ENCODE measurements at regions of chr6 and their contacts with region 1.

Region 1: DNA sequence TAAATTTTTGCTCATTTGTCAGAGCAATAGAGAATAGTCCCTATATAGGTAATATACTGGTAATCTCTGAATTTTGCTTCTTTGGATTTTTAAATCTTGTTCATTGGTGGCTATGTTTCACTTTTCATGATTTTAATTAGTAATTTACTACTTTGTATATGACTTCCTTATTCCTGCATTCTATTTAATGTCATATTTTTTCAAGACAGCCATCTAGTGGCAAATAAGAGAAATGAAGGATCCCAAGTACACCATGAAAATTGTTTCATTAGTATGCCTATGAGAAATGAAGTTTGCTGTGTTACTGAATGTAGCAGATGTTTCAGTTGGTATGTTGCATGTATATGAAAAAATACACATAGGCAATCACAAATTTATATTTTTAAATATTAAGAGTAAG is 82.4 kb downstream of the ZNF292 start:
- DNase-seq: peak; percentile 31
- H3K4me3 Mint-ChIP-seq: no peak overlapping the region
- H3K27ac Mint-ChIP-seq: no peak overlapping the region
- H3K4me1 Mint-ChIP-seq: no peaks in the 10 kb centered on the region
- H3K27me3 Mint-ChIP-seq: no peaks in the 10 kb centered on the region
- CTCF ChIP-seq: peak; percentile 46

Region 2: GRCh38 chr6:87049779-87050178 is 188.0 kb before region 1 on chr6:
- CTCF ChIA-PET with region 1: no interaction called
- POLR2A ChIA-PET with region 1: no interaction called
- intact Hi-C with region 1: no loop called
- DNase-seq: no peak
- H3K4me3 Mint-ChIP-seq: no peak overlapping the region
- H3K27ac Mint-ChIP-seq: no peak overlapping the region
- H3K4me1 Mint-ChIP-seq: no peaks in the 10 kb centered on the region
- H3K27me3 Mint-ChIP-seq: peaks cover 56% of the 10 kb centered on the region
- CTCF ChIP-seq: no peak

Region 3: DNA sequence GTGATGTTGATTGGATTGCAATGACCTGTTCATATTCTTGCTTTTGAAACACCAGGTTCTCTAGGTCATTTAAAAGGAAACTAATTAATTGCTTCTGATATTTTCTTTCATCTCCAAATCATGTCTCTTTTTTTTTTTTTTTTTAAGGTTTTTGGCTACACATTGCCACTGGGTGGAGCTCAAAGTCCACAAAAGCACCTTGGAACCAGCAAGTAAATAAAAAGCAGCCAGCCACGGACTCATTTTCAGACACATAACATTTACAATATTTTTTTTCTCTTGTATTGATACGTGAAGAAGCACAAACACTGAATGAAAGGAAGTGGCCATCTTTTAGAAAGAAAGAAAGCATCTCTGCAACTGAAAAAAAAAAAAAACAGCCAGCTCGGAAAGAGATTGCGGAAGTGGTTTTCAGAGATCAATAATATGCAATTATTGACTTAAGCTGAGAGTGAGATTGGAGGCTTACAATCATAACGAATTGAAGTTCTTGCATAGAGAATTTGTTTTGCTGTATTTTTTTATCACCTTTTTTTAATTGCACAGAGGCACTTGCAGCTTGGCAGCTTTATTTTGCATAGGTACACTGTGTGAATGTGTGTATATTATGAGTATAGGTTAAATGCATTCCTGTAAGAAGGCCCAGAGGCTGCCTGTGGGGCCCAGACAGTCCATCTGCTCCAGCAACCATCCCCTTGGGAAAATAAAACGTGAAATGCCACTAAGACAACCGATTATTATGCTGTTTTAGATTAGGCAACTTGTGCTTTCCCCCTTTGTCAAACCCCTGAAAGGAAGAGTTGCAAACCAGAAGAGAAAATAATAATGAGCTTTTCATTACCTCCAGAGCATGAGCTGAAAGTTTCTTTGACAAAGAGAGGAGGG is 171.1 kb before region 1 on chr6:
- CTCF ChIA-PET with region 1: interaction called, 6 read pairs
- POLR2A ChIA-PET with region 1: no interaction called
- intact Hi-C with region 1: loop called (anchors 2 kb)
- DNase-seq: peak; percentile 62
- H3K4me3 Mint-ChIP-seq: peak overlapping the region; percentile 60
- H3K27ac Mint-ChIP-seq: no peak overlapping the region
- H3K4me1 Mint-ChIP-seq: peaks cover 10% of the 10 kb centered on the region
- H3K27me3 Mint-ChIP-seq: peaks cover 41% of the 10 kb centered on the region
- CTCF ChIP-seq: peak; percentile 72

Region 4: GRCh38 chr6:87154993-87155841 is 82.6 kb before region 1 on chr6 and contains the start of gene ZNF292:
- CTCF ChIA-PET with region 1: interaction called, 3 read pairs
- POLR2A ChIA-PET with region 1: interaction called, 7 read pairs
- intact Hi-C with region 1: loop called (anchors 1 kb)
- DNase-seq: peak; percentile 98
- H3K4me3 Mint-ChIP-seq: peak within 1 kb of the TSS; percentile 85
- H3K27ac Mint-ChIP-seq: peak within 1 kb of the TSS; percentile 90
- H3K4me1 Mint-ChIP-seq: peaks cover 6% of the 10 kb centered on the region
- H3K27me3 Mint-ChIP-seq: no peaks in the 10 kb centered on the region
- CTCF ChIP-seq: no peak
- total RNA-seq, gene ZNF292: 17.1 and 24.4 TPM in 2 replicates

Region 5: DNA sequence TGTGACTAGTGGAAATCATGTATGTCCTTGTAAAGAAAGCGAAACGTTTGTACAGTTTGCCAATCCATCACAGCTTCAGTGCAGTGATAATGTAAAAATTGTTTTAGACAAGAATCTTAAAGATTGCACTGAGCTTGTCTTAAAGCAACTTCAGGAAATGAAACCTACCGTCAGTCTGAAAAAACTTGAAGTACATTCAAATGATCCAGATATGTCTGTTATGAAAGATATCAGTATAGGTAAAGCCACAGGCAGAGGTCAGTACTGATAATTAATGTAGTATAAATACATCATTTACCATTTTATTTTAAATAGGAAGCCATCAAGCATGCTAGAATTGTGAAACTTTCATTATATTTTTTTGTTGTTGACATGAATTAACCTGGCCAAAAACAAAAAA is 23.7 kb after region 1 on chr6:
- CTCF ChIA-PET with region 1: no interaction called
- POLR2A ChIA-PET with region 1: no interaction called
- intact Hi-C with region 1: no loop called
- DNase-seq: no peak
- H3K4me3 Mint-ChIP-seq: no peak overlapping the region
- H3K27ac Mint-ChIP-seq: no peak overlapping the region
- H3K4me1 Mint-ChIP-seq: no peaks in the 10 kb centered on the region
- H3K27me3 Mint-ChIP-seq: no peaks in the 10 kb centered on the region
- CTCF ChIP-seq: no peak

Measured in MCF 10A (cell line).